Dorsolateral prefrontal cortex (tissue), 120 donors: ENCODE measurements at regions of chr19 and their contacts with region 1.

Region 1: DNA sequence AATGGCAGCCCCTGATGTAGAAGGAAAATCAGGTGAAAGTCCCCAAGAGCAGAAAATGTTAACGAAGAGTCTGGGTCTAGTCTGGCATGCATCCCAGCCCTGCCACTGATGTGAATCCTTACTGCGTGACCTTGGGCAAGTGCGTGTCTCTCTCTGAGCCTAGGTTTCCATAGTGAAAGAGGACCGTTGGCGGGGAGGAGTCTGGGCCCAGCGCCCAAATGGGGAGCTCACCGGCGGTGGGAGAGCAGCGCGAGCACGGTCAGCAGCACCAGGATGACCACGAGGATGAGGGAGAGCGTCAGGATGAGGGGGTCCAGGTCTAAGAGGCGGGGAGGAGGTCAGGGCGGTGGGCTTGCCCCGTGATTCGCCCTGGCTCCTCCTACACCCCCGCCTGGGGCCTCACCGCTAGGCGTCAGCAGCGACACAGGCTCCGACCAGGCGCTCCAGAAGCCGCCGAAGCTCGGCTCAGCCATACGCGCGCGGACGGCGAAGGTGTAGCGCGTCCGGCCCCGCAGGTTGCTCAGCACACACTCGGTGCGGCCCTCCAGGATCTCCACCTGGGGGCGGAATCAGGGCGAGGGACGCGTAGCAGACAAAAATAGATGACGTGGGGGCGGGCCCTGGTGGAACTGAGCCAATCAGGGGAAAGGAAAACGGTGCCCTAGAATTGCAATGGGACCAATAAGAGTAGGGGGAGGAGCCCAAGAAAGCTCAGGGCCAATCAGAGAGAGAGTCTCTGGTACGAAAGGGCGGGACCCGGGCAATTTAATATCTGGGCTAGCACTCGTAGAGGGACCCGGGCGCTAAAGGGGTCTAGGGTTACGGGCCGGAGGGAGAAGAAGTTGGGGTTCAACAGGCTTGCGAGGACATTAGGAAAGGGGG is 3.2 kb downstream of the EPOR start:
- DNase-seq: peak; percentile 84 to 98 (median 95)
- H3K4me3 ChIP-seq: peak overlapping the region; percentile 57 to 96 (median 79)
- H3K27ac ChIP-seq: peak overlapping the region; percentile 21 to 97 (median 91)
- H3K27me3 ChIP-seq: peaks cover 0 to 26% (median 12%) of the 10 kb centered on the region in 45 donors
- CTCF ChIP-seq: peak; percentile 48 to 94 (median 83)

Region 2: DNA sequence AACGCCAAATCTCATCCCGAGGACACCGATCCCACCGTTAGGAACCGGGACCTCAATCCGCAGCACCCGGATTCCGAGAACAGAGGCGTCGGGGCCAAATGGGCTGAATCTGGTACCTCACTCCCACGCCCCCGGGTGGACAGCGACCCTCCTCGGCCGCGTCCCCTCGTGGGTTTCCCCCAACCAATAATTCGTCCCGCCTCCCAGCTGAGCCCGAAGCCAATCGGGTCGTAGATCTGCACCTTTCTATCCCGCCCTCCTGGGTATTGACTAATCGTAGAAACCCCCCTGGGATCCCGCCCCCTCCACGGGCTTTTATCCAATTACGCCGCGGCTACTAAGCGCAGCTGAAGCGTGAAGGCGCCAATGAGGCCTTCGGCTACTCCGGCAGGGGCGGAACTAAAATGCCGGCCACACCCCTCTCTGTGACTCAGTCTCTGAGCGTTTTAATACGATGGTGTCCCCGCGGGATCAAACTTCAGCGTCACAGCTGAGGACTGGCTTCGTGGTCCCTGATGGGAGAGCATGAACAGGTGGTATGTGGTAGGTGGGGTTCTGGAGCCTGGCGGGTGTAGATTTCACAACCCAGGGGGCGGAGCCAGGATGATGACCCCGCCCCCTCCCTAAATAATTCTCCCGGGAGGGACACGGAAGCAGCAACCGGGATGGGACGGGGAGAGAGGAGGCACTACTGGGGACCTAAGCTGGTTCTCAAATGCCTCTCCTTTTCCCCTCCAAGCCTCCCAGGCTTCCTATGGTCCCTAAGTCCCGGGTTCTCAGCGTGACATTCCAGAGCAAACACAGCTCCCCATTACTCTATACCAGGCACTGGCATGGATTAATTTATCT is 34.6 kb before region 1 on chr19 and contains the starts of genes CCDC159 and TMEM205:
- intact Hi-C with region 1: loop called in 1 of 2 experiments (anchors 5 kb)
- DNase-seq: peak; percentile 96 to 99 (median 99)
- H3K4me3 ChIP-seq: peak within 1 kb of the TSS; percentile 39 to 94 (median 82)
- H3K27ac ChIP-seq: peak within 1 kb of the TSS in 58 of 59 donors; percentile 13 to 93 (median 83)
- H3K27me3 ChIP-seq: no peaks in the 10 kb centered on the region
- CTCF ChIP-seq: peak in 35 of 56 donors; percentile 6 to 64 (median 31)
- total RNA-seq, gene CCDC159: 31.2 to 104 (median 61.7) TPM
- total RNA-seq, gene TMEM205: 70.3 to 122 (median 96.4) TPM

Region 3: GRCh38 chr19:11435058-11435832 is 54.4 kb after region 1 on chr19 and contains the starts of genes ODAD3 and PRKCSH:
- intact Hi-C with region 1: loop called in 1 of 2 experiments (anchors 2 kb)
- DNase-seq: peak; percentile 98 to 100 (median 100)
- H3K4me3 ChIP-seq: peak within 1 kb of the TSS; percentile 69 to 96 (median 85)
- H3K27ac ChIP-seq: peak within 1 kb of the TSS; percentile 69 to 99 (median 96)
- H3K27me3 ChIP-seq: no peaks in the 10 kb centered on the region
- CTCF ChIP-seq: peak; percentile 65 to 98 (median 91)
- total RNA-seq, gene ODAD3: 1.5 to 15.0 (median 4.5) TPM
- total RNA-seq, gene PRKCSH: 166 to 389 (median 218) TPM

Region 4: GRCh38 chr19:11446652-11447301 is 65.9 kb after region 1 on chr19:
- intact Hi-C with region 1: loop called in 1 of 2 experiments (anchors 5 kb)
- DNase-seq: peak; percentile 71 to 92 (median 84)
- H3K4me3 ChIP-seq: peak overlapping the region in 56 of 59 donors; percentile 15 to 72 (median 50)
- H3K27ac ChIP-seq: peak overlapping the region; percentile 7 to 100 (median 95)
- H3K27me3 ChIP-seq: no peaks in the 10 kb centered on the region
- CTCF ChIP-seq: peak; percentile 51 to 94 (median 86)